ENCODE measurements at regions of chr10 and their contacts with region 1.

Region 1: GRCh38 chr10:31759799-31760626 is 168.6 kb downstream of the ARHGAP12 start:
- DNase-seq: peak; percentile 97
- ATAC-seq: peak; percentile 95
- H3K4me3 ChIP-seq: peak overlapping the region; percentile 71 to 74
- H3K27ac ChIP-seq: peak overlapping the region; percentile 17 to 92
- H3K4me1 ChIP-seq: no peaks in the 10 kb centered on the region
- H3K27me3 ChIP-seq: no peaks in the 10 kb centered on the region

Region 2: DNA sequence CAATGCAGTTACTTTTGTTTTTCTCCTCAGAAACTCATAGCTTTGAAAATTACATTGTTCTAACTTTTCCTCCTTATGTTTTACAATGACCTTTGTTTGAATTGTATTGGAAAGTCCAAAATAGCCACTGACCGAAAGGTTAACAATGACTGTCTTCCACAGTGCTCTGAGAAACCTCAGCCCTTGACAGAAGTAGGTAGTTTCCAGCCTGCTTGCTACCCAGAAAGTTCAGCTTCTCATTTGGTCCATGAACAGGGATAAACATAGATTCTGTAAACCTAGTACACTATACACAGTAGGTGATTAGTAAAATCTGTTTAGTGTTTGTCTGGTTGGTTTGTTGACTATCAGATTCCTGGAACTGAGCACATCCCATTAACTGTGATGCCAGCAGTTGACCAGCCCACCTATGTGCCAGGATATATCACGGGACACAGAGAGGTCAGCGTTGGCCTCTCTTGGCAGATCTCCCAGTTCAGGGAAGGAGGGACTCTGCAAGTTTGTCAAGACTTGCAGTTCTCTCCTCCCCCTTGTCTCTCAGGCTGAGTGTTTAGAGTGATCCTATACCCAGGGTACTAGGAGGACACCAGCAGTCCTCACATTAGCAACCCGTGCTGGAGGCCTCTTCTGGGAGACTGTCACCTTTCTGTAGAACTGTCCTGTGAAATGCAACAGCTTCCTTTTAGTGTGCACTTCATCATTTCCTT is 129.0 kb before region 1 on chr10:
- intact Hi-C with region 1: no loop called
- DNase-seq: no peak
- ATAC-seq: no peak
- H3K4me3 ChIP-seq: no peak overlapping the region
- H3K27ac ChIP-seq: no peak overlapping the region
- H3K4me1 ChIP-seq: no peaks in the 10 kb centered on the region
- H3K27me3 ChIP-seq: no peaks in the 10 kb centered on the region

Region 3: GRCh38 chr10:31644931-31645633 is 114.9 kb before region 1 on chr10:
- intact Hi-C with region 1: loop called in 1 of 2 experiments (anchors 5 kb)
- DNase-seq: no peak
- ATAC-seq: no peak
- H3K4me3 ChIP-seq: no peak overlapping the region
- H3K27ac ChIP-seq: no peak overlapping the region
- H3K4me1 ChIP-seq: peaks cover 0 to under 1% of the 10 kb centered on the region in 2 donors
- H3K27me3 ChIP-seq: no peaks in the 10 kb centered on the region

Region 4: DNA sequence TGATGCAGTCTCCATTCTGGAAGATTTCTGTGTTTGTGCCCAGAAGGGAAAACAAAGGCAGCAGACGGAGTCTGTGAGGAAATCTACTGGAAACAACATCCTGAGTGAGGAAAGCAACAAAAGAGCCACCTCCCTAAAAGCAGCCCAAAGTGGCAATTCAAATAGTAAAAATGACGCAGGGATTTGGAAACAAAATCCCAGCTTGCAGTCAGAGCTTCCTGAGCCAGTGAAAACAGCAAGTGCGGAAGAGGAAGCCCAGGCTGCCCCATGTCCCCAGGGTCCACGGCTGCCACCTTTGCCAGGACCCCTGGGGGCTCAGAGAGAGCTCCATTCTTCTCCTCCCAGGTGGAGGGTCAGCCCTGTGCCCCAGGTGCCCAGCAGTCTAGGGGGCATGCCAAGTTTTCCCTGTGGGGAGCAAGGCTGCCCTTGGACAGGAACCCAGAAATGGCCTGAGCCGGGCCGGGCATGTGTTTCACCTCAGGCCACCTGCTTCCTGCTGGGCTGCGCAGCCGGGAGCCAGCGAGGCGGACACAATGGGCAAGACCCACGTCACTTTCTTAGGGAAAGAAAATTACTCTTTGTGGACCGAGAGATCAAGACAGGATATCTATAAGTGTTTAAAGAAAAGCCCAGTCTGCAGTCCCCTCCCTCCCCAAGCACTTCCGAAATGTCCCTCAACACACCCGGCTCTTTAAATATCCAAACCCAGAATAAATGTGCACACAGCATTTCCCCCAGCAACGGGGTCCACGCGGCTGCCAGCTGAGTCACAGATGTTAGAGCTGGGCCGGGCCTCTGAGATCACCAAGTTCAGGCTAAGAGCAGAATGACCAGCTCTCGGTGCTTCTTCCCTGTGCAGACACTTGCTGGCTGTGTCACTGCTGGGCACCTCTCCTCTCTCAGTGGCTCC is 62.5 kb before region 1 on chr10:
- intact Hi-C with region 1: loop called (anchors 2 to 5 kb)
- DNase-seq: peak; percentile 95 to 97
- ATAC-seq: peak; percentile 91
- H3K4me3 ChIP-seq: no peak overlapping the region
- H3K27ac ChIP-seq: peak overlapping the region; percentile 98 to 99
- H3K4me1 ChIP-seq: peaks cover 2 to 10% of the 10 kb centered on the region in 2 donors
- H3K27me3 ChIP-seq: no peaks in the 10 kb centered on the region